CD4-positive, alpha-beta memory T cell (primary cell): ENCODE measurements at regions of chr6 and their contacts with region 1.

Region 1: GRCh38 chr6:34161857-34162515 is 16.1 kb upstream of the GRM4 start:
- DNase-seq: no peak
- H3K4me3 ChIP-seq: no peak overlapping the region
- H3K4me3 Mint-ChIP-seq: peak overlapping the region in 1 of 8 donors; percentile 7
- H3K27ac ChIP-seq: no peak overlapping the region
- H3K27ac Mint-ChIP-seq: peak overlapping the region in 1 of 7 donors; percentile 66
- H3K4me1 ChIP-seq: peaks cover 4% of the 10 kb centered on the region
- H3K4me1 Mint-ChIP-seq: peaks cover 0 to 8% (median 4%) of the 10 kb centered on the region in 4 donors
- H3K27me3 ChIP-seq: no peaks in the 10 kb centered on the region
- H3K27me3 Mint-ChIP-seq: no peaks in the 10 kb centered on the region

Region 2: DNA sequence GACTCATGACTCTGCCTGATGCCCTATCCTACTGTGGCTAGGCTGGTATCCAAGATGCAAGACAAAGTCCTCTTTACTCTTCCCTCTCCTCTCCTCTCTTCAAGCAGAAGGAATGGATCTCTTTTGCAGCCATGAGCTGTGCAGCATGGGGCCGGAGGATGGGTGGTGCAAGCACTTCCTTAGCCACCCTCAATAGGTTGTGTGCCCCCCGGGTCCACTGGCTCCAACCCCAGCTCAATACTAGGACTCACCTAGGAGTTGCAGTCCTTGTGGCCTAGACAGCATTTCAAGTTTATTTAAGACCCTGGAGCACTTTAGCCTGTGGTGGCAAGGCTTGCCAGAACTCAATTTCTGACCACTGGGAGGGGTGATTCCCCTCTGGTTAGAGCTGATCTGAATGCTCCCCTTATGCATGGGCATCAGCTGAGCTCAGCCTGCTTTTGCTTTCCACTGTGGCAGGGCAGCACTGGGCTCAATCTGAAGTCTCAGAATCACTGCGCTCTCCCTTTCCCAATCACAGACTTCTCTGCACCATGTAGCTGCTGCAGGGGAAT is 12.9 kb after region 1 on chr6:
- CTCF ChIA-PET with region 1: interaction called, 14 read pairs
- POLR2A ChIA-PET with region 1: no interaction called
- intact Hi-C with region 1: no loop called
- DNase-seq: no peak
- H3K4me3 ChIP-seq: no peak overlapping the region
- H3K4me3 Mint-ChIP-seq: no peak overlapping the region
- H3K27ac ChIP-seq: no peak overlapping the region
- H3K27ac Mint-ChIP-seq: peak overlapping the region in 1 of 7 donors; percentile 60
- H3K4me1 ChIP-seq: no peaks in the 10 kb centered on the region
- H3K4me1 Mint-ChIP-seq: peaks cover 4 to 7% (median 5%) of the 10 kb centered on the region in 4 donors
- H3K27me3 ChIP-seq: no peaks in the 10 kb centered on the region
- H3K27me3 Mint-ChIP-seq: no peaks in the 10 kb centered on the region

Region 3: GRCh38 chr6:34189806-34190503 is 28.0 kb after region 1 on chr6:
- CTCF ChIA-PET with region 1: interaction called, 30 read pairs
- POLR2A ChIA-PET with region 1: interaction called, 4 read pairs
- intact Hi-C with region 1: loop called (anchors 1 kb)
- DNase-seq: peak in 4 of 5 donors; percentile 26 to 54 (median 44)
- H3K4me3 ChIP-seq: no peak overlapping the region
- H3K4me3 Mint-ChIP-seq: no peak overlapping the region
- H3K27ac ChIP-seq: no peak overlapping the region
- H3K27ac Mint-ChIP-seq: peak overlapping the region in 1 of 7 donors; percentile 54
- H3K4me1 ChIP-seq: peaks cover 3% of the 10 kb centered on the region
- H3K4me1 Mint-ChIP-seq: peaks cover 0 to 11% (median 6%) of the 10 kb centered on the region in 4 donors
- H3K27me3 ChIP-seq: no peaks in the 10 kb centered on the region
- H3K27me3 Mint-ChIP-seq: no peaks in the 10 kb centered on the region

Region 4: DNA sequence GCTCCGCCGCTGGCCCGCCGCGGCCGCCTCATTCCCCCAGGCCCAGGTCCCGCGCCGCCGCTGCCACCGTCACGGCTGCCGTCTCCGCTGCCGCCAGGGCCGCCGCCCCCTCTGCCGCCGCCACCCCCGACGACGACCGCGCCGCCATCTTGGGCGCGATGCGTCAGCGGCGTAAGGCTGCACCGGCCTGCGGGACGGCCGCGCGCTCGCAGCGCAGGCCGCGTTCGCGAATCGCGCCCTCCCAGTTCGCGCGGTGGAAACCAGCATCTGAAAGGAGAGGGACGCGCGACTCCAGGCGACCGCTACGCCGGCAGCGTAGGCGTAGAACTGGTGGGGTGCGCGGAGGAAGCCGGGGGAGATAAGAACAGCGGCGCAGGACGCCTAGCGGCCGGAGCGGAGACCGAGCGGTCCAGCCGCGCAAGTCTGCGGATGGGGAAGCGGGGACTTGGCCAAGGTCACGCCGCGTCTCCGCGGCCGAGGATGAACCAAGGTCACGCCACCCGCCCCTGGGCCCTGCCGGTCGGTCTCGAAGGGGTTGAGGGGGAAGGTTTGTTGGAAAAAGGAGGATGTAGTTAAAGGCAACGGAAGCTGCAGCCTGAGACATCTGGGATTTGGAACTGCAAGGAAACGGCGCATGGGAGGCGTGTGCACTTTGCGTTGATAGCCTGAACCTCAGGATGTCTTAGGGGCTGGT is 230.7 kb after region 1 on chr6 and contains the start of gene NUDT3:
- CTCF ChIA-PET with region 1: interaction called, 7 read pairs
- POLR2A ChIA-PET with region 1: no interaction called
- intact Hi-C with region 1: loop called (anchors 2 kb)
- DNase-seq: peak; percentile 92 to 97 (median 93)
- H3K4me3 ChIP-seq: peak within 1 kb of the TSS; percentile 73 to 78
- H3K4me3 Mint-ChIP-seq: peak within 1 kb of the TSS in 7 of 8 donors; percentile 74 to 99 (median 95)
- H3K27ac ChIP-seq: peak within 1 kb of the TSS; percentile 89
- H3K27ac Mint-ChIP-seq: peak within 1 kb of the TSS in 6 of 7 donors; percentile 75 to 96 (median 95)
- H3K4me1 ChIP-seq: peaks cover 24% of the 10 kb centered on the region
- H3K4me1 Mint-ChIP-seq: peaks cover 13 to 27% (median 18%) of the 10 kb centered on the region in 4 donors
- H3K27me3 ChIP-seq: no peaks in the 10 kb centered on the region
- H3K27me3 Mint-ChIP-seq: no peaks in the 10 kb centered on the region
- total RNA-seq, gene NUDT3: 25.9 TPM

Region 5: GRCh38 chr6:34610819-34611477 is 449.0 kb after region 1 on chr6:
- CTCF ChIA-PET with region 1: interaction called, 34 read pairs
- POLR2A ChIA-PET with region 1: no interaction called
- intact Hi-C with region 1: loop called (anchors 1 kb)
- DNase-seq: no peak
- H3K4me3 ChIP-seq: no peak overlapping the region
- H3K4me3 Mint-ChIP-seq: no peak overlapping the region
- H3K27ac ChIP-seq: no peak overlapping the region
- H3K27ac Mint-ChIP-seq: peak overlapping the region in 5 of 7 donors; percentile 48 to 74 (median 63)
- H3K4me1 ChIP-seq: peaks cover 8% of the 10 kb centered on the region
- H3K4me1 Mint-ChIP-seq: peaks cover 10 to 23% (median 15%) of the 10 kb centered on the region in 4 donors
- H3K27me3 ChIP-seq: no peaks in the 10 kb centered on the region
- H3K27me3 Mint-ChIP-seq: no peaks in the 10 kb centered on the region